Activated CD8-positive, alpha-beta T cell treated with anti-CD3 and anti-CD28 coated beads, Interleukin-2, amount 10 ng/mL, durations not matched to agents 7 days and 5 days (primary cell): ENCODE measurements at regions of chr12 and their contacts with region 1.

Region 1: DNA sequence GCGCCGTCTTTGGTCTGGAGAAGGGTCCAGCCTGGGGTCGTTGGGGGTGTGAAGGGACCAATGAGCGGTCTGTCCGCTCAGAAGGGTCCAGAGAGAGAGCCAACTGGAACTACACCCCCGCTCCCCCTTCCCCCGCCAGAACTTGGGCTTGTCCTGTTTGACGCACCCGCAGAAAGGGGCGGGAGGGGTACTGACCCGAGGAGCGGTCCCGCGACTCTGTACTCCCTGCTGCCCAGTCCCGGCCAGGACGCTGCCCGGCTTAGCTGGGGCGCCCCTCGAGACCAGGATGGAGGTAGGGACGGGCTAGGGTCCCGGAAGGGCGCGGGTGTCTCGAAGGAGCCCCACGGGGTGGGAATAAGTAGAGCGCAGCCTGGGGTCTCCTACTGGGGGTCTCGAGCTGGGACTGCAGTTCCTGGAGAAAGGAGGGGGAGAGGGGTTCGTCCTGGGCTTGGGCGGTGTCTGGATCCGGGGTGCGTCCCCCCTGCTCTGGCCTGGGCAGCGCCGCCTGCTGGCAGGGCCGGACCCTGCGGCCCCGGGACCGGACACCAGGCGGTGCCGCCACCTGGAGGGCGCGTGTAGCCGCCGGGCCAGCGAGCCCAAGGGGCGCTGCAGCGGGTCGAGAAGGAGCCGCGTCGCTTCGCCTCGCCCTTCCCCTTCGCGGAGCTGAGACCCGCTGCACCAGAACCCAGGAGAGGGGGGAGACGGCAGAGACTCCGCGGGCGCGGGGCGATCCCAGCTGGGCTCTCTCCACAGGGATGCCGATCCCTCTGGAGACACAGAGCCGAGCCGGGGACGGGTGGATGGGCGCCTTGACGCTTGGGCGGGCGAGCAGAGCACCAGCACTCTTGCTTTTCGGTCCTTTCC is 3.8 kb upstream of the CACNB3 start:
- DNase-seq: peak; percentile 87
- ATAC-seq: peak; percentile 85
- H3K4me3 Mint-ChIP-seq: peak overlapping the region; percentile 87
- H3K27ac Mint-ChIP-seq: peak overlapping the region; percentile 86
- H3K4me1 Mint-ChIP-seq: peaks cover 44% of the 10 kb centered on the region
- H3K27me3 Mint-ChIP-seq: peaks cover 29% of the 10 kb centered on the region

Region 2: GRCh38 chr12:48671231-48671856 is 143.2 kb before region 1 on chr12:
- CTCF ChIA-PET with region 1: no interaction called
- POLR2A ChIA-PET with region 1: no interaction called
- DNase-seq: no peak
- ATAC-seq: peak; percentile 20
- H3K4me3 Mint-ChIP-seq: no peak overlapping the region
- H3K27ac Mint-ChIP-seq: no peak overlapping the region
- H3K4me1 Mint-ChIP-seq: peaks cover 3% of the 10 kb centered on the region
- H3K27me3 Mint-ChIP-seq: no peaks in the 10 kb centered on the region

Region 3: DNA sequence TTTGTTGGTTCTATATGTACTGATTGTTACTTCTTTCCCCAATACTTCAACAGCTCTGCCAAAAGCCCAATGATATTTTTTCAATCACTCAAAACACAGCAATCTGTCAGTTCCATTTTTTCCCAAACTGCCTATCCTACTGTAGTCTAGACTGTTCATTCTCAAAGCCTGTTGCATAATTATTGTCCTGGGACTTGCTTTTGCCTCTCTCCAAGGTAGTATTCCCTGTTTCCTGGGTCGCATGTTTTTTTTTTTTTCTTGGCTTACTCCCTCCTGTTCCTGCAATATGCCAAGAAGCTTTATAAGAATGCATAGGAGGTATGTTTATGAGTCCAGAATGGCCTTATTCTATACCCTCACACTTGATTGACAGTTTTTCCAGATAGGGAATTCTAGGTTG is 78.0 kb before region 1 on chr12:
- CTCF ChIA-PET with region 1: interaction called, 10 read pairs
- POLR2A ChIA-PET with region 1: no interaction called
- DNase-seq: no peak
- ATAC-seq: no peak
- H3K4me3 Mint-ChIP-seq: no peak overlapping the region
- H3K27ac Mint-ChIP-seq: no peak overlapping the region
- H3K4me1 Mint-ChIP-seq: no peaks in the 10 kb centered on the region
- H3K27me3 Mint-ChIP-seq: peaks cover 21% of the 10 kb centered on the region

Region 4: GRCh38 chr12:48750769-48751735 is 63.4 kb before region 1 on chr12:
- CTCF ChIA-PET with region 1: interaction called, 53 read pairs
- POLR2A ChIA-PET with region 1: no interaction called
- DNase-seq: no peak
- ATAC-seq: no peak
- H3K4me3 Mint-ChIP-seq: no peak overlapping the region
- H3K27ac Mint-ChIP-seq: no peak overlapping the region
- H3K4me1 Mint-ChIP-seq: peaks cover 8% of the 10 kb centered on the region
- H3K27me3 Mint-ChIP-seq: peaks cover 16% of the 10 kb centered on the region

Region 5: GRCh38 chr12:48800971-48801370 is 13.5 kb before region 1 on chr12:
- CTCF ChIA-PET with region 1: interaction called, 57 read pairs
- POLR2A ChIA-PET with region 1: interaction called, 3 read pairs
- DNase-seq: no peak
- ATAC-seq: no peak
- H3K4me3 Mint-ChIP-seq: no peak overlapping the region
- H3K27ac Mint-ChIP-seq: no peak overlapping the region
- H3K4me1 Mint-ChIP-seq: peaks cover 20% of the 10 kb centered on the region
- H3K27me3 Mint-ChIP-seq: no peaks in the 10 kb centered on the region

Region 6: DNA sequence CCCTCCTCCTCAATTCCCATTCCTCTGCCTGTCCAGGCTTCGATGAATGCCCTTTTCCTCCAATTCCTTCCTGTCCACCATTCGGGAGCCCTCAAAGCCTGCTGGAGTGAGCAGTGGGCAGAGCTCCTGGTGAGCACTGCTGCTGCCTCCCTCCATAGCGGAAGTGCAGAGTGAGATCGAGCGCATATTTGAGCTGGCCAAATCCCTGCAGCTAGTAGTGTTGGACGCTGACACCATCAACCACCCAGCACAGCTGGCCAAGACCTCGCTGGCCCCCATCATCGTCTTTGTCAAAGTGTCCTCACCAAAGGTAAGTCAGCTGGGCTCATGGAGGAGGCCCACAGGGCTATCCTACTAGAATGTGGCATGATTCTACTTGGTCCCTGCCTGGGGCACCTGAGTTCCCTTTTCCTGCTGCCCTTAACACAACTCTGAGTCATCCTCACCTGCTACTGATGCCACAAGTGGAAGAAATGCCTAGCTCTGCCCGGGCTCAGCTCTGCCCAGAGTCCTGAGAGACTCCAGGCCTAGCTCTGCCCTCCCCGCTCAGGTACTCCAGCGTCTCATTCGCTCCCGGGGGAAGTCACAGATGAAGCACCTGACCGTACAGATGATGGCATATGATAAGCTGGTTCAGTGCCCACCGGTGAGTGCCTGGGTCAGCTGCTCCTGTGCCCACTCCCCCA is 11.9 kb after region 1 on chr12:
- CTCF ChIA-PET with region 1: interaction called, 36 read pairs
- POLR2A ChIA-PET with region 1: interaction called, 6 read pairs
- DNase-seq: no peak
- ATAC-seq: no peak
- H3K4me3 Mint-ChIP-seq: no peak overlapping the region
- H3K27ac Mint-ChIP-seq: peak overlapping the region; percentile 17
- H3K4me1 Mint-ChIP-seq: no peaks in the 10 kb centered on the region
- H3K27me3 Mint-ChIP-seq: peaks cover 4% of the 10 kb centered on the region